ENCODE measurements at regions of chr14 and their contacts with region 1.

Region 1: GRCh38 chr14:91035855-91036254 is 24.6 kb downstream of the RPS6KA5 start:
- DNase-seq: no peak
- H3K4me3 ChIP-seq: no peak overlapping the region
- H3K4me3 Mint-ChIP-seq: peak overlapping the region in 5 of 8 donors; percentile 8 to 55 (median 18)
- H3K27ac ChIP-seq: no peak overlapping the region
- H3K27ac Mint-ChIP-seq: peak overlapping the region; percentile 8 to 83 (median 62)
- H3K4me1 ChIP-seq: peaks cover 23% of the 10 kb centered on the region
- H3K4me1 Mint-ChIP-seq: peaks cover 53 to 80% (median 67%) of the 10 kb centered on the region in 4 donors
- H3K27me3 ChIP-seq: no peaks in the 10 kb centered on the region
- H3K27me3 Mint-ChIP-seq: no peaks in the 10 kb centered on the region

Region 2: GRCh38 chr14:91009501-91010152 is 26.2 kb before region 1 on chr14:
- CTCF ChIA-PET with region 1: interaction called, 3 read pairs
- POLR2A ChIA-PET with region 1: no interaction called
- intact Hi-C with region 1: loop called (anchors 1 kb)
- DNase-seq: peak in 1 of 5 donors; percentile 13
- H3K4me3 ChIP-seq: no peak overlapping the region
- H3K4me3 Mint-ChIP-seq: peak overlapping the region in 6 of 8 donors; percentile 6 to 62 (median 25)
- H3K27ac ChIP-seq: no peak overlapping the region
- H3K27ac Mint-ChIP-seq: peak overlapping the region in 1 of 7 donors; percentile 1
- H3K4me1 ChIP-seq: peaks cover 33% of the 10 kb centered on the region
- H3K4me1 Mint-ChIP-seq: peaks cover 27 to 51% (median 42%) of the 10 kb centered on the region in 4 donors
- H3K27me3 ChIP-seq: no peaks in the 10 kb centered on the region
- H3K27me3 Mint-ChIP-seq: no peaks in the 10 kb centered on the region